ENCODE measurements at regions of chr16 and their contacts with region 1.

Region 1: DNA sequence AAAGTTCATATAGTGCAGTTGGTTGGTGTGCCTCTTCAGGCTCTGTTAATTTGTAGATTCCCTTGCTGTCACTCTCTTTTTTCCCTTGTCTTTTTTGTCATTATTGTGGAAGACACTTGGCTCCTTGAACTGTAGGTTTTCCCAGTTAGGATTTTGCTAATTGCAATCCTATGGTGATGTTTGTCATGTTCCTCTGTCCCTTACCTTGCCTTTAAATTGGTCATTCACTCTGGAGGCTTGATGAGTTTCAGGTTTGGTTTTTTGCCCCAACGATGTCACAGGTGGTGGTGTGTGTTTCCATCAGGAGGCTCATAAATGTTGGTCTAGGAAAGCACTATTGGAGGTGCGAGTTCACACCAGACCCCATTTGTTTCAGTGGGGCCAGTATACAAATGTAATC is 383.7 kb downstream of the SNX29 start:
- DNase-seq: no peak
- H3K4me3 ChIP-seq: no peak overlapping the region
- H3K27ac ChIP-seq: no peak overlapping the region
- H3K4me1 ChIP-seq: peaks cover 19% of the 10 kb centered on the region
- H3K27me3 ChIP-seq: no peaks in the 10 kb centered on the region
- CTCF ChIP-seq: no peak
- POLR2A ChIP-seq: no peak

Region 2: GRCh38 chr16:12371497-12371896 is 11.3 kb after region 1 on chr16:
- intact Hi-C with region 1: loop called (anchors 1 kb)
- DNase-seq: no peak
- H3K4me3 ChIP-seq: no peak overlapping the region
- H3K27ac ChIP-seq: no peak overlapping the region
- H3K4me1 ChIP-seq: no peaks in the 10 kb centered on the region
- H3K27me3 ChIP-seq: no peaks in the 10 kb centered on the region
- CTCF ChIP-seq: no peak
- POLR2A ChIP-seq: no peak